PC-9 (cell line): ENCODE measurements at regions of chr11 and their contacts with region 1.

Region 1: DNA sequence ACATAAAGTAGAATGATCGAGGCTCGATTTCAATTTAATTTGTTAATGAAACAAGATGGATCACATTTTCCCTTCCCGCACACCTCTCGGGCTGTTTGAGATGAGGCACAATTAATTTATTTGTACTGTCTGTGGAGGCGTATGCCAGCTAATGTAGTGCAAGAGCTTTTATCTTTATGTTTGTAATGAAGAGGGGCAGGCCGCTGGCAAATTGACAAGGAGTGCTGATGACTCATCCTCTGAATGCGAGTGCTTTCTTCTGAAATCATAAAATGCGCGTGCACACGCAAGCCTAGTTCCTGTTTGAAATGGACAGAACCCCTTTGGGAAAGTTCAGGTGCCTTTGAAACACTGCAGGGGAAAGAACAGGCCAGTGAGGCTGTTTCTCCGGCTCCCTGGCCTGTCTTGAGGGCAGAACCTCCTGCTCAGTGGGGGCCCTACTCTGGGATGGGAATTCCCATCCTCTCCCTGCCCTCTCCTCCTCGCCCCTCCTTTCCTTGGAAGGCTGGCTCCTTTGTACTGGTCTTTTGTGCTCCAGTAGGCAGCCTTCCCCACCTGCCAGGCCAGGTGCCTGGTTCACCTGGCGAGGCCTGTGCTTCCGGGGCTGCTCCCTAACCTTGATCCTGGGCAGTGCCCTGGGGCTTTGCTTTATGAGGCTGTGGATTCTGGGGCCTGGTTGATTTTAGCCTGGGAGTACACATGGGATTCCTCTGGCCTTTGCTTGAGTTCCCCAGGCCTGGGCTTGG is 50.3 kb downstream of the TEAD1 start:
- DNase-seq: peak; percentile 73 to 88
- H3K4me3 ChIP-seq: peak overlapping the region; percentile 50; the same call in 1 of the 2 replicates
- H3K27ac ChIP-seq: peak overlapping the region; percentile 98
- H3K4me1 ChIP-seq: peaks cover 83% of the 10 kb centered on the region
- H3K27me3 ChIP-seq: no peaks in the 10 kb centered on the region
- CTCF ChIP-seq: no peak

Region 2: DNA sequence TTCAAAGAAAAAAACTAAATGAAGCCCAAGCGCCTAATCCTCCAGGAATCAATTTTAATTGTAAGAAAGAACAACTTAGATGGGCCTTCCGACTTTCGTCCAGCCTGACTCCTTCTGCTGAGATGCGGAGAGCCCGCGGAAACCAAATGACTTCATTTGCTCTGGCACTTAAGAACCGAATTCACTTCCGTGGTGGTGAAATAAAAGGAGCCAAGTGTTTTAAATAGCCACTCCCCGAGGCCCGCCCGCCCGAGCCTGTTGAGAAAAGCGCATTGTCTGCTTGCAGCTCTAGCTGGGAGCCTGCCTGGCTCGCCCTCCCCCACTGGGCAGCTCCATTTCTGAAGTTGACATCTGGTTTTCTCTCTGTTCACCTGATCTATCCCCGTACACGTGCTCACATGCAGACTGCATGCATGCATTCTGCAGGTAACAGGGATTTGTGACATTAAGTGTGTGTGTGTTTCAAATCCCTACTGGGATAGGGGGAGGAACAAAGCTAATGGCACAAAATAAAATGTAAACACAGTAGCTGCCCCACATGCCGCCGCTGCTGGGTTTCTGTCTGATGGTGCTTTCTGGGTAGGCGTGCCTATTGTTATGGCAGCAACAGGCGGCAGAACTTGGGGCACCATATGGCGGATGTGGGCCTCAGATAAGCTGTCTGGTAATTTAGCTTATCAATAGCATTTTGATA is 44.1 kb before region 1 on chr11:
- CTCF ChIA-PET with region 1: interaction called, 3 read pairs
- POLR2A ChIA-PET with region 1: interaction called, 4 read pairs
- intact Hi-C with region 1: loop called (anchors 1 kb)
- DNase-seq: peak; percentile 72 to 75
- H3K4me3 ChIP-seq: peak overlapping the region; percentile 94; the same call in 1 of the 2 replicates
- H3K27ac ChIP-seq: peak overlapping the region; percentile 61
- H3K4me1 ChIP-seq: peaks cover 77% of the 10 kb centered on the region
- H3K27me3 ChIP-seq: no peaks in the 10 kb centered on the region
- CTCF ChIP-seq: no peak

Region 3: GRCh38 chr11:12706545-12707499 is 17.7 kb before region 1 on chr11:
- CTCF ChIA-PET with region 1: no interaction called
- POLR2A ChIA-PET with region 1: no interaction called
- intact Hi-C with region 1: no loop called
- DNase-seq: no peak
- H3K4me3 ChIP-seq: no peak overlapping the region
- H3K27ac ChIP-seq: no peak overlapping the region
- H3K4me1 ChIP-seq: peaks cover 11% of the 10 kb centered on the region; the same call in 1 of the 2 replicates
- H3K27me3 ChIP-seq: no peaks in the 10 kb centered on the region
- CTCF ChIP-seq: no peak

Region 4: GRCh38 chr11:12746593-12747097 is 22.2 kb after region 1 on chr11:
- CTCF ChIA-PET with region 1: no interaction called
- POLR2A ChIA-PET with region 1: no interaction called
- intact Hi-C with region 1: loop called (anchors 2 kb)
- DNase-seq: peak; percentile 76 to 85
- H3K4me3 ChIP-seq: 0 out of 2 replicates have a peak overlapping the region, but pooled peaks have one; percentile 8
- H3K27ac ChIP-seq: peak overlapping the region; percentile 49
- H3K4me1 ChIP-seq: peaks cover 23% of the 10 kb centered on the region
- H3K27me3 ChIP-seq: no peaks in the 10 kb centered on the region
- CTCF ChIP-seq: no peak

Region 5: DNA sequence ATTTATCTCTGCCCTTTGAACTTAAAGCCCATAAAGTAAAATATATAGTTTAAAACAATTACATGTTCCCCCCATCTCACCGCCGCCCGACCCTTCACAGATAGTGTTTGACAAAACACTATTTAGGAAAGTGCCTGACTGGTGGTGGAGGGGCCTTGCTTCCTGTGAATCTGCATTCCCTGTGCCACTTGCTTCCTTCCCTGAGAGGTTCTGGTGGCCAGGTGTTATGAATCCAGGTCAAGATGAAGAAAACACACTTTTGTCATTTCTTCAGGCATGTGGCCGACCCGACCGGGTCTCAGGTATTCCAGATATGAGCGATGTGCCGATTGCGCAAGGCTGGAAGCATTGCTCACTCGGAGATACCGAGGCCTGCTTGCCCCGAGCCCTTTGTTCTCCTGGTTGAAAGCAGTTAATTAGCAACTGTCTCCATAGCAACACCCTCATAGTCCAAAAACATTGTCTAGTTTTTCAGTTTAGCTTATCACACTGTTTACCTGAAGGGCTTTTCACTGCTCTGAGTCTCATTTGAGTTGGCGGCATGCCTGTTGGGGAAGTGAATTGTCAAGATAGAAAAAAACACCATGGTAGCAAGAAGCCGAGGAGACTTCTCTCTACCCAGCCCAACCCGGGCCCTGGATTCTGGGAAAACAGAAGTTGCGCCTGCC is 78.1 kb after region 1 on chr11:
- CTCF ChIA-PET with region 1: no interaction called
- POLR2A ChIA-PET with region 1: no interaction called
- intact Hi-C with region 1: loop called (anchors 1 kb)
- DNase-seq: peak; percentile 90 to 98
- H3K4me3 ChIP-seq: peak overlapping the region; percentile 45; the same call in 1 of the 2 replicates
- H3K27ac ChIP-seq: peak overlapping the region; percentile 88
- H3K4me1 ChIP-seq: peaks cover 86% of the 10 kb centered on the region
- H3K27me3 ChIP-seq: no peaks in the 10 kb centered on the region
- CTCF ChIP-seq: no peak

Region 6: DNA sequence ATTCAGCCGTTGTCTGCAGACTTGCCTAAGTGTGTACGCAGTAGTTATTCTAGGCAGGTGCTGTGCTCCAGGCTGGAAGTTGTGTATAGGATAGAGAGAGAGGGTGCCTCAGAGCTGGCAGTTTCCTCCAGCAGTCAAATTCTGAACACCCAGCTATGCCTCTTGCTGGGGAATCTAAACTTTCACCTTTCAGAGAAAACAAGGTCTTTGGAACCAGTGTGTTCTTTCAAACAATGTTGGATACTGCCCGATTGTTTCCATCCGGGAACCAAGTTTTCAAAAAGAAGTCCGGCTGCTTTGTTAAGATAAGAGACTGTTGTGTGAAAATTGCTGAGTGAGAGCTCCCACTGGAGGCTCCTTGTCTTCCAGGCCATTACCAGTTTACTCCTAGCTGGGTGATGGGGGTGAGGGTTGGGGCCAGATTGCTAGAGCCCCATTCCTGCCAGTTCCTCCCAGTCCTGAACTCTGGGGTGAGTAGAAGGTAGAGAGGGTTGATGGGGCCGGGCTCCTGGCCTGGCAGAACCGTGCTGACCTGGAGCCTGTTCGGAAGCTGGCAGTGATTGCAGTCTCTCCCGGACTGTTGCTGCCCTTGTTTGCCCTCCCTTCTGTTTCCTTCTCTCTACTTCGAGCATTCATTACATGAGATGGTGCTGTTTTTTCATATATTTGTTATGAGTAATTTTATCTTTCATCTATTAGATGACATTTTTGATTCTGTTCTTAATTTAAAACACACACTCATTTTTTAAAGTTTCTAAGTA is 100.0 kb after region 1 on chr11:
- CTCF ChIA-PET with region 1: no interaction called
- POLR2A ChIA-PET with region 1: no interaction called
- intact Hi-C with region 1: no loop called
- DNase-seq: no peak
- H3K4me3 ChIP-seq: no peak overlapping the region
- H3K27ac ChIP-seq: no peak overlapping the region
- H3K4me1 ChIP-seq: peaks cover 31% of the 10 kb centered on the region
- H3K27me3 ChIP-seq: no peaks in the 10 kb centered on the region
- CTCF ChIP-seq: no peak